HEK293 (cell line): ENCODE measurements at regions of chr5 and their contacts with region 1.

Region 1: GRCh38 chr5:142699184-142699720 is 13.4 kb upstream of the FGF1 start:
- H3K4me3 ChIP-seq: no peak overlapping the region
- H3K27ac ChIP-seq: no peak overlapping the region
- H3K4me1 ChIP-seq: peaks cover 16% of the 10 kb centered on the region
- CTCF ChIP-seq: peak; percentile 92

Region 2: DNA sequence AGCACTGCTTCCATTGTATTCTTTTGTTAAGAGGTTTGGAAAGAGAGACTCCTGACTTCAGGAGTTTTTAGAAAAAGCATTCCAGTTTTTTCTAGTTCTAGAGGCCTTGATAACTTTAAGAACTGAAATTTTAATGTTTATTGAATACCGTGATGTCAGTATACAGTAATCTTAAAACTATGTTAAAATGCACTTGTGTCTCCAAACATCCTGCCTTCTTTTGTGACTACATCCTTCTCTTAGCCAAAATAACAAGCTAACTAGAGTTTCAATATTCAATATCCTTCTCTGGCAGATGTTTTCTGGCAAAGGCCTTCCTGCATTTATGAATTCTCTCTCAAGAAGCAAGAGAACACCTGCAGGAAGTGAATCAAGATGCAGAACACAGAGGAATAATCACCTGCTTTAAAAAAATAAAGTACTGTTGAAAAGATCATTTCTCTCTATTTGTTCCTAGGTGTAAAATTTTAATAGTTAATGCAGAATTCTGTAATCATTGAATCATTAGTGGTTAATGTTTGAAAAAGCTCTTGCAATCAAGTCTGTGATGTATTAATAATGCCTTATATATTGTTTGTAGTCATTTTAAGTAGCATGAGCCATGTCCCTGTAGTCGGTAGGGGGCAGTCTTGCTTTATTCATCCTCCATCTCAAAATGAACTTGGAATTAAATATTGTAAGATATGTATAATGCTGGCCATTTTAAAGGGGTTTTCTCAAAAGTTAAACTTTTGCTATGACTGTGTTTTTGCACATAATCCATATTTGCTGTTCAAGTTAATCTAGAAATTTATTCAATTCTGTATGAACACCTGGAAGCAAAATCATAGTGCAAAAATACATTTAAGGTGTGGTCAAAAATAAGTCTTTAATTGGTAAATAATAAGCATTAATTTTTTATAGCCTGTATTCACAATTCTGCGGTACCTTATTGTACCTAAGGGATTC is 547.5 kb before region 1 on chr5:
- CTCF ChIA-PET with region 1: interaction called, 26 read pairs
- POLR2A ChIA-PET with region 1: no interaction called
- H3K4me3 ChIP-seq: no peak overlapping the region
- H3K27ac ChIP-seq: no peak overlapping the region
- H3K4me1 ChIP-seq: peaks cover 3% of the 10 kb centered on the region; the same call in 1 of the 2 replicates
- CTCF ChIP-seq: peak; percentile 54; the same call in 1 of the 2 replicates

Region 3: DNA sequence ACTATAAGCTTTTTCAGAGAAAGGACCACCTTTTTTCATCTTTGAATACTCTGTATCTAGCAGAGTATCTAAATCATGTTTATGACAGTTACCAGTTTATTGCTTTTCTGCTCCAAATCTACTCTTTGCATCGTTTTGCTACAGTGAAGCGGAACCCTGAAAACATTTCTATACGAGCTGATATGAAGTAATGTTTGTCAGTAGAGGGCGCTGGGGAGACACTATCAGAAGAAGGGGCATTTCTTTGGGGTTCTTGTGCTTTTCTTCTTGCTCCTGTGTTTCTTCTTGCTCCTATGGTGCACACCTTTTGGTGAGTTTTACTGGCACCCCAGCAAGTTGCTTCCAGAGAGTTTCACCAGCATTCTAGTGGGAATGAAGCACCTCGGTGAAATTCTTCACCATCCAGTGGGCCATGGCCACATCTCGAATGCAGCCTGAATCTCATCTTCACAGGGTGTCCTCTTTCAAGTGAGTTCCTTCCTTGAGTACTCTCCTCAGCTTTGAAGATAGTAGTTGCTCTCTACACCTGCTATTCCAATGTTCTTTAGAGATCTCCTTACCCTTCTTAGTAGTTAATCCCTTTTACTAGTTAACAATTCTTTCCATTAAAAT is 111.8 kb before region 1 on chr5:
- CTCF ChIA-PET with region 1: interaction called, 13 read pairs
- POLR2A ChIA-PET with region 1: no interaction called
- H3K4me3 ChIP-seq: no peak overlapping the region
- H3K27ac ChIP-seq: no peak overlapping the region
- H3K4me1 ChIP-seq: no peaks in the 10 kb centered on the region
- CTCF ChIP-seq: no peak

Region 4: DNA sequence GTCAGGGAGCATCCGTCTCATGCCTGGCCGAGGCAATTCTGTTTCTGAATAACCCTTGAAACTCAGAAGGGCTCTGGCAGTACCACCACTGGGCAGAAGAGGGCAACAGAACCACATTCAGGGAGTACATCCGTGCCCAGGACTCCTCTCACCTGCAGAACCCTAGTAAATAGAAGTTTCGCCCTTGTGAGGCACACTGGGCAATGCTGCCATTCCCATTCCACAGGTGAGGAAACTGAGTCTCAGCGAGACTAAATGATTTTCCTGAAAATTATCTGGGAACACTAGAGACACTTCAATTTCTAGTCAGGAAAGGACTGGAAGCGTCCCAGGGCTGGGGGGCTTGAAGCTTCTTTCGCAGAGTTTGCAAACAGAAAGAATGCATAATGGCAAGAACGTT is 88.1 kb before region 1 on chr5:
- CTCF ChIA-PET with region 1: interaction called, 93 read pairs
- POLR2A ChIA-PET with region 1: interaction called, 3 read pairs
- H3K4me3 ChIP-seq: no peak overlapping the region
- H3K27ac ChIP-seq: no peak overlapping the region
- H3K4me1 ChIP-seq: no peaks in the 10 kb centered on the region
- CTCF ChIP-seq: peak; percentile 80

Region 5: GRCh38 chr5:142655339-142656267 is 43.6 kb before region 1 on chr5:
- CTCF ChIA-PET with region 1: interaction called, 232 read pairs
- POLR2A ChIA-PET with region 1: interaction called, 9 read pairs
- H3K4me3 ChIP-seq: no peak overlapping the region
- H3K27ac ChIP-seq: no peak overlapping the region
- H3K4me1 ChIP-seq: no peaks in the 10 kb centered on the region
- CTCF ChIP-seq: peak; percentile 90

Region 6: GRCh38 chr5:142671801-142672200 is 27.5 kb before region 1 on chr5:
- CTCF ChIA-PET with region 1: interaction called, 11 read pairs
- POLR2A ChIA-PET with region 1: interaction called, 4 read pairs
- H3K4me3 ChIP-seq: no peak overlapping the region
- H3K27ac ChIP-seq: no peak overlapping the region
- H3K4me1 ChIP-seq: no peaks in the 10 kb centered on the region
- CTCF ChIP-seq: no peak

Region 7: GRCh38 chr5:142888469-142889085 is 189.3 kb after region 1 on chr5:
- CTCF ChIA-PET with region 1: interaction called, 10 read pairs
- POLR2A ChIA-PET with region 1: no interaction called
- H3K4me3 ChIP-seq: no peak overlapping the region
- H3K27ac ChIP-seq: no peak overlapping the region
- H3K4me1 ChIP-seq: no peaks in the 10 kb centered on the region
- CTCF ChIP-seq: peak; percentile 26; the same call in 1 of the 2 replicates

Region 8: GRCh38 chr5:142981886-142982820 is 282.9 kb after region 1 on chr5:
- CTCF ChIA-PET with region 1: no interaction called
- POLR2A ChIA-PET with region 1: no interaction called
- H3K4me3 ChIP-seq: no peak overlapping the region
- H3K27ac ChIP-seq: no peak overlapping the region
- H3K4me1 ChIP-seq: no peaks in the 10 kb centered on the region
- CTCF ChIP-seq: no peak